Dendritic cell treated with granulocyte-macrophage colony-stimulating factor and Interleukin-4, amounts not matched to agents 40 ng/mL and 50 ng/mL, for 4 days (primary cell): ENCODE measurements at regions of chr20 and their contacts with region 1.

Region 1: GRCh38 chr20:12207875-12208274 is 290.2 kb downstream of the BTBD3 start:
- H3K4me3 Mint-ChIP-seq: no peak overlapping the region
- H3K27ac Mint-ChIP-seq: no peak overlapping the region
- H3K4me1 Mint-ChIP-seq: no peaks in the 10 kb centered on the region
- H3K27me3 Mint-ChIP-seq: no peaks in the 10 kb centered on the region

Region 2: GRCh38 chr20:11676630-11677284 is 531.1 kb before region 1 on chr20:
- intact Hi-C with region 1: loop called (anchors 5 kb)
- H3K4me3 Mint-ChIP-seq: no peak overlapping the region
- H3K27ac Mint-ChIP-seq: no peak overlapping the region
- H3K4me1 Mint-ChIP-seq: no peaks in the 10 kb centered on the region
- H3K27me3 Mint-ChIP-seq: no peaks in the 10 kb centered on the region

Region 3: DNA sequence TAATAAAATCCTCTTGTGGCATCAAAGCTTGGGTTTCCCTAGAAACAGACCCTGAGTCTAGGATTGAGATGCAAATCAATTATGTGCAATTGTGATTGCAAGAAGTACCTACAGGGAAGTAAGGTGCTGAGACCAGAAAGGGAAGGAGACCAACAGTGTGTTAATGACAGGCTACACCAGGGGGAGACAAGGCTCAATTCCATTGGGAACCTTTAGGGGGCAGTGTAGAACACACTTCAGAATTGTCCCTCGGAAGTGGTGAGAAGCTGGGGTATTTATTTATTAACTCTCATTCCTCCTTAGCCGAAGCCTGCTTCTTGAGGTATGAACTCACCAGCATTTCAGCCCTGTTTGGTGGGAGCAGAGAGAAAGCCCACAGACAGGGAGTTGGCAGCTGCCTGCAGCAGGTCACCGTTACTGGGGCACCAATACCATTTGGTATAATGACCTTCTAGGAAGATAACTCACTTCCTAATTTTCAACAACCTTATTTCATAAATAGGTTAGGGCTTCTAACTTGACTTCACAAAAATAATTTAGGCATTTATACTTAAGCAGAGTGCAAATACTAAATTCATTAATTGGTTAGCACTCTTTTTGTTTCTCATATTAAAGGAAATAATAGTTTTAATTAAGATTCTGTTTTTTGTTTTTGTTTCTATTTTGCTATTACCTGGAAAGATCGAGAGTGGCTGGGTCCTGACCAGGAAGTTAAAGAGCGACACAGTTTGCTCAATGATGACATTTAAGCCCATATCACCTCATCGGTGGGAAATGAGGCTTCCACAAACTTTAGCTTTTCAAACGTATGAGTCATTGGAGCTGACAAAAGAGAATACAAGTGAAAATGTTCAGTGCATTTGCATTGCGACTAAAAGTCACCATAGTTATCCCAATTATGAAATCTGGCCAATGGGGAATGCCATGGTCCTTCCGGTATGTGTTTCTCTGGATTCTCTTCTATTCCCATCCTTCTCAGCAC is 195.3 kb before region 1 on chr20:
- intact Hi-C with region 1: loop called (anchors 2 kb)
- H3K4me3 Mint-ChIP-seq: no peak overlapping the region
- H3K27ac Mint-ChIP-seq: no peak overlapping the region
- H3K4me1 Mint-ChIP-seq: peaks cover 6% of the 10 kb centered on the region
- H3K27me3 Mint-ChIP-seq: no peaks in the 10 kb centered on the region

Region 4: DNA sequence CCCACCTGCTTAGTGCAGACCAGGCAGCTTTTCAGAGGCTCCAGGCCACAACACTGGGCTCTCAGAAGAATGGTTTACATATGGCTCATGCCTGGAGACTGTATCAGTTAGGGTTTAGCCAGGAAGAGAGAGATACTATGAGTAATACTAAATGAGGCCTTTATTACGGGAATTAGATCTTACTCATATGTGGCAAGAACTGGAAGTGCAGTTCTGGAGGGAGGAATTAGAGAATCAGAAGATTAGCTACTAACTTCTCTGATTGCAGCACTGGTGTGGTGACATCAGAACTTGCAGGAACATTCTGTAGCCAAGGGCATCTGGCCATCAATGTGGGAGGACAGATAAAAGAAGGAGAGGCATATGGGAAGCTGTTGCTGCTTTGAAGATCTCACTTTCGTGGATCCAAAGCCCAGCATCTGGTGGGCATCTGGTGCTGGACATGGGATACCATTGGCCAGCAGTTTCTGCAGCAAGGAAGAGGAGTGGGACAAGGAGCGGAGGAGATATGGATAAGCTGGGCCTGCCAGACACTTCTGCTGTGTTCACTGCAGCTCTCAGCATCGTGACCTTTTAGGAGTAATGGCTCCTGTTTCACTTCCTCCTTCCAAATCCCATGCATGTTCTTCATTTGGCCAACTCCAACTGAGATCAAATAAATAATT is 41.7 kb before region 1 on chr20:
- intact Hi-C with region 1: no loop called
- H3K4me3 Mint-ChIP-seq: no peak overlapping the region
- H3K27ac Mint-ChIP-seq: peak overlapping the region; percentile 76
- H3K4me1 Mint-ChIP-seq: peaks cover 16% of the 10 kb centered on the region
- H3K27me3 Mint-ChIP-seq: no peaks in the 10 kb centered on the region